ENCODE measurements at regions of chr15 and their contacts with region 1.

Region 1: GRCh38 chr15:57146506-57147201 is 228.2 kb downstream of the TCF12 start:
- DNase-seq: peak; percentile 69
- H3K4me3 ChIP-seq: no peak overlapping the region
- H3K27ac ChIP-seq: peak overlapping the region; percentile 63
- H3K4me1 ChIP-seq: peaks cover 24% of the 10 kb centered on the region
- H3K27me3 ChIP-seq: no peaks in the 10 kb centered on the region
- CTCF ChIP-seq: peak; percentile 40 to 45
- POLR2A ChIP-seq: no peak

Region 2: DNA sequence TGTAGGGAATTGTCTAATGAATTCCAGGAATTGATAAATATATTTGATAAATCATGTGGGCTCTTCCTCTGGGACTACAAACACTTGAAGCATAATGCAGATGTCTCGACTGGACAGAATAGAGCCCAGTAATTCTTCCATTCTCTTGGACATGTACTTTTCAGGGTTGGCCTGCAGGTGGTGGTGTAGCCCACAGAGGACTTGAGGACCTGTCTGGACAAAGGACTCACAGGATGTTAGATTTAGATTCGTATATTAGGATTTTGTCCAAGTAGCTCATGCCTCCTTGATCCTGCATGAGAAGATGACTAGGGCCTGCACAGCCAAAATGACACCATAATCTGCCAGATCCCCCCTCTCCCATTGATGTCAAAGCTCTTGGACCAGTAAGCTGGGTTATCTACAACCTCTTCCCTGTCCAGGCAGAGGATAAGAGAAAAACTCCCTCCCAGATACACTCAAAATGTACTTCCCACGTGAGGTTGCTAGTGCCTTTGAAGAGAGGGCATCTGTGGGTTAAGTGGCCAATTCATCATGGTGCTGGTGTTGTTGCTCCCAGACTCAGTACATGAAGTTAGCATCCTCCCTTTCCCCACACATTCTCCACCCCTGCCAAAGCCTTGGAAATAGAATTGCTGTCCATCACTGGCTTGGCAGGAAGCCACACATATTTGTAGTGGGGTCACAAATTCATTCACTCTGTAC is 324.8 kb before region 1 on chr15:
- CTCF ChIA-PET with region 1: interaction called, 18 read pairs
- POLR2A ChIA-PET with region 1: no interaction called
- dilution Hi-C with region 1: no loop called
- intact Hi-C with region 1: no loop called
- DNase-seq: peak; percentile 77
- H3K4me3 ChIP-seq: no peak overlapping the region
- H3K27ac ChIP-seq: no peak overlapping the region
- H3K4me1 ChIP-seq: peaks cover 18% of the 10 kb centered on the region
- H3K27me3 ChIP-seq: peaks cover 0 to 3% of the 10 kb centered on the region in 2 experiments
- CTCF ChIP-seq: peak; percentile 65 to 74
- POLR2A ChIP-seq: no peak

Region 3: DNA sequence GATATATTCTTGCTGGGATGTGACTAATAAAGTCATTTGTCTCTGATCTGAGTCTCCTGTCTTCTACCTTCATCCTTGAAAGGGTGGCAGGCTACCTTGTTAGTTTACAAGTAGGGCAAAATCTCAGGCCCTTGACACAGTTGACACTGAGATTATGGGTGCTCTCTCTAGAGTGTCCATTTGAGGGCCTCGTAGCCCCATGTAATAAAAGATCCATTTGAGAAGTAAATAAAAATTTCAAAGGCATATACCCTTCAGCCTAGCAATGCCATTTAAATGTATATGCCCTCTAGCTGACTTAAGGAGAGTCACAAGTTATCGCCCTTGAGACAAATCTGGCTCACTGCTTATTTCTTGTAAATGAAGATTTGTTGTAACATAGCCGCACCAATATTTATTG is 129.6 kb before region 1 on chr15:
- CTCF ChIA-PET with region 1: interaction called, 10 read pairs
- POLR2A ChIA-PET with region 1: no interaction called
- dilution Hi-C with region 1: no loop called
- intact Hi-C with region 1: no loop called
- DNase-seq: peak; percentile 44
- H3K4me3 ChIP-seq: no peak overlapping the region
- H3K27ac ChIP-seq: no peak overlapping the region
- H3K4me1 ChIP-seq: peaks cover 6% of the 10 kb centered on the region
- H3K27me3 ChIP-seq: no peaks in the 10 kb centered on the region
- CTCF ChIP-seq: peak in 1 of 2 donors; percentile 12
- POLR2A ChIP-seq: no peak

Region 4: DNA sequence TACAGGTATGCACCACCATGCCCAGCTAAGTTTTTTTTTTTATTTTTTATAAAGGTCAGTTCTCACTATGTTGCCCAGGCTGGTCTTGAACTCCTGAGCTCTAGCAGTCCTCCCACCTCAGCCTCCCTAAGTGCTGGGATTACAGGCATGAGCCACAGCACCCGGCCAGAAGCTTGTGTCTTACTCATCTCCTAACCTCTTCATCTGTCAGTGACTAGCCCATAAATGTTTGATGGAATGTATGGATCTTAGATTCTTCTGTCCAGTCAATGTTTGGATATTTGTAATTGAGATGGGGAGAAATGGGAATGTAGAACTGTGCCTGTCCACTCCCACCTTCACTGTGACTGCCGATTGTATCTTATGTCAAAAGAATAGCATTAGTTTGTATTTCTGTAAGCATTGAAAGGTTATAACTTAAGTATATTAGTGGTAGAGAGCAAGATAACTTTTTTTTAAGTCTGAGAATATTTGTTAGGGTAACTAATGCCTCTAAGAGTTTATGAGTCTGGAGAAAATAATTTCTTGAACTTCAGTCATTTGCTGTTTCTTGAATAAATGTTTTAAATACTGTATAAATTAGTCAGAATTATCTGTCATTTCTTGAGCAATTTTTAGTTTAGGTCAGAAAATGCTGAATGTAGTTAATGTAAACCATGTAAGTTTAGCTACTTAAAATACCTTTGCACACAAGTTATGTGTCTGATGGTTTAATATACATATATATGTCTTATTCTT is 14.3 kb after region 1 on chr15:
- CTCF ChIA-PET with region 1: interaction called, 11 read pairs
- POLR2A ChIA-PET with region 1: no interaction called
- dilution Hi-C with region 1: no loop called
- intact Hi-C with region 1: no loop called
- DNase-seq: no peak
- H3K4me3 ChIP-seq: no peak overlapping the region
- H3K27ac ChIP-seq: no peak overlapping the region
- H3K4me1 ChIP-seq: peaks cover 8% of the 10 kb centered on the region
- H3K27me3 ChIP-seq: no peaks in the 10 kb centered on the region
- CTCF ChIP-seq: no peak
- POLR2A ChIP-seq: no peak

Region 5: GRCh38 chr15:57213862-57214261 is 67.2 kb after region 1 on chr15:
- CTCF ChIA-PET with region 1: interaction called, 127 read pairs
- POLR2A ChIA-PET with region 1: interaction called, 3 read pairs
- dilution Hi-C with region 1: no loop called
- intact Hi-C with region 1: loop called (anchors 1 kb)
- DNase-seq: peak; percentile 76
- H3K4me3 ChIP-seq: no peak overlapping the region
- H3K27ac ChIP-seq: no peak overlapping the region
- H3K4me1 ChIP-seq: peaks cover 17% of the 10 kb centered on the region
- H3K27me3 ChIP-seq: no peaks in the 10 kb centered on the region
- CTCF ChIP-seq: peak; percentile 18 to 24
- POLR2A ChIP-seq: no peak

Region 6: DNA sequence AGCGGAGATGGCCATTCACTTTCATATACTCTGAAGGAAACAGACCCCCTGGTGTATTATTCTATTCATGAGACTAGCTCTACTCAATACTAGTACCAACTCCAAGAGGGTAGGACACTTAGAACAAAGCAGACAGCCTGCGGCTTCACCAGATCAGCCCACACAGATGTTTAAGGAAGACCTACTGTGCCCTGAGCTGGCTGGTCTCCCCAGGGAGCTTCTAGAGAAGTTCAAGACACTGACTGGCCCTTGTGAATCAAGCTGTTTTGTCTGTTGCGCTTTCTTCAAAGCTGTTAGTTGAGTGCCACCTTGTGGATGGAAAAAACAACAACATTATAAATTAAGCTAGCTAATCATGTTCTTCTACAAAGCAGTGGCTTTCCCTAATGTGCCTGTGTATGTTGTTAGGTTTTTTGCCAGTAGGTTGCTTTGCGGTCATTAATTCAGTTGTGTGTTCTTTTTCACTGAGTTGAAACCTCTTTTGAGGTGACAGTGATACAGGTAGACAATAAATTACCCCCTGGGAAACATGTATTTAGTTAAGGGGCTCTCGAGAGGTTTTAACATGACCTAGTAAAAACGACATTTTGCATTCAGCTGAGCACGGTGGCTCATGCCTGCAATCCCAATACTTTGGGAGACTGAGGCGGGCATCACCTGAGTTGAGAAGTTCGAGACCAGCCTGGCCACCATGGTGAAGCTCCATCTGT is 380.9 kb after region 1 on chr15:
- CTCF ChIA-PET with region 1: interaction called, 86 read pairs
- POLR2A ChIA-PET with region 1: no interaction called
- dilution Hi-C with region 1: no loop called
- intact Hi-C with region 1: loop called (anchors 1 kb)
- DNase-seq: peak; percentile 86
- H3K4me3 ChIP-seq: no peak overlapping the region
- H3K27ac ChIP-seq: no peak overlapping the region
- H3K4me1 ChIP-seq: peaks cover 35% of the 10 kb centered on the region
- H3K27me3 ChIP-seq: no peaks in the 10 kb centered on the region
- CTCF ChIP-seq: peak; percentile 41
- POLR2A ChIP-seq: no peak

Measured in endothelial cell of umbilical vein (primary cell).